ENCODE measurements at regions of chr10 and their contacts with region 1.

Region 1: GRCh38 chr10:14648005-14648765 is 126.5 kb downstream of the FAM107B start:
- DNase-seq: peak; percentile 83
- H3K4me3 Mint-ChIP-seq: peak overlapping the region; percentile 75
- H3K27ac Mint-ChIP-seq: peak overlapping the region; percentile 98
- H3K4me1 Mint-ChIP-seq: peaks cover 69% of the 10 kb centered on the region
- H3K27me3 Mint-ChIP-seq: no peaks in the 10 kb centered on the region

Region 2: GRCh38 chr10:14084875-14085274 is 563.3 kb before region 1 on chr10:
- CTCF ChIA-PET with region 1: no interaction called
- intact Hi-C with region 1: no loop called
- DNase-seq: no peak
- H3K4me3 Mint-ChIP-seq: no peak overlapping the region
- H3K27ac Mint-ChIP-seq: no peak overlapping the region
- H3K4me1 Mint-ChIP-seq: no peaks in the 10 kb centered on the region
- H3K27me3 Mint-ChIP-seq: no peaks in the 10 kb centered on the region

Region 3: DNA sequence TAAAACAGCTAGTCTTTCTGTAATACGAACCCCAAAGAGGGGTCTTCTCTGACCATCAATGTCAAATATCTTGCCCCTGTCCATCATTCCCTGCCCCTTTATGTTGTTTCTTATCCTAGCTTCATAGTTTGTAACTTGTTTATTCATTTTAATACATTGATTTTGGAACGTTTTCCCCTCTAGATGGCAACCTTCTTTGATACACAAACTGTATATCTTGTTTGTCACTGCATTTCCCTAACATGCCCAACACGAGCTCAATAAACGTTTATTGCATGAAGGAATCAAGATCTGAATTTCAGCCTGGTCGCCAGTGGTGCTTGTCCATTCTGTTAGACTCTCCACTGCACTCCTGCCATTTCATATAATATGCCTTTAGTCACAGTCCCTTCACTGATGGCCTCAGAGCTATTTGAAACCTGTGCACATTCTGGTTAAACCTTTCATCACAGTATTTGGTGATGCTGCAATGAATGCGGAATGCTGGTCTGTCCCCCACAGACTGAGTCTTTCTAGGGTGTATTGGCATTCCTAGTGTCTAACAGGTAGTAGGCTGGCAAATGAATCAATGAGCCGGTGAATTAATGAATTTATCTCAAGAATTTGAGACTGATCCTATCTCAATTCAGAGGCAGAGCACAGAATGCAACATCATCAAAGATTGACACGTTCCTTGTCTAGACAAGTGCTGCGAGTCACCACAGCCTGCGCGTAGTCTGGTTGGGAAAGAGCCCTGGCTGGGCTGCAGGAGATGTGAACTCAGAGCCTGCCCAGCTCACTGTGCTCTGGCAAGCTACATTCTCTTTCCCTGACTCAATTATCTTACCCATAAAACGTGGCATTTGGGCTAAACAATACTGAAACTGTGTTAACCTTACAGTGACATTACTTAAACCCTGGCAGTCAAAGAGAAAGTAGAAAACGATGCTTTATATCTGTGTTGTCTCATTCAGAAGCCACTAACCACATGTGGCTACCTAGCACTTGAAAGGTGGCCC is 262.3 kb before region 1 on chr10:
- CTCF ChIA-PET with region 1: no interaction called
- intact Hi-C with region 1: loop called (anchors 1 kb)
- DNase-seq: peak; percentile 67
- H3K4me3 Mint-ChIP-seq: no peak overlapping the region
- H3K27ac Mint-ChIP-seq: no peak overlapping the region
- H3K4me1 Mint-ChIP-seq: peaks cover 80% of the 10 kb centered on the region
- H3K27me3 Mint-ChIP-seq: peaks cover 3% of the 10 kb centered on the region

Region 4: DNA sequence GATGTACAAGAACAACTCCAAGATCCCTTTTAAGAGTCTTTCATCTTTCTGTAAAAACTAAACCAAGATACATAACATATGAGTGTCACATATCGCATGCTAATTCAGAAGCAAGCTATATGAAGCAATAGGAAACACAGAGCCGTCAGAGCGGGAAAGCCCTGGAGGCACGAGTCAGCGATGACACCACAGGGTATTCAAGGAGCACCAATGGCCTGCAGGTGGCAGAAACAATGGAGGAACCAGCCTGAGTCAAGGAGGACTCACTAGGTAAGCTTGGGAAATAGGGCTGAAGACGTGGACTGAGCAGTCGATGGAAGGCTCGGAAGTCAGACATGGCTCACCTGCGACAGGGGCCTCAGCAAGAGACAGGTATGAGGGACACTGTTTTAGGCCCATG is 87.9 kb before region 1 on chr10:
- CTCF ChIA-PET with region 1: no interaction called
- intact Hi-C with region 1: loop called (anchors 1 kb)
- DNase-seq: peak; percentile 94
- H3K4me3 Mint-ChIP-seq: peak overlapping the region; percentile 13
- H3K27ac Mint-ChIP-seq: peak overlapping the region; percentile 88
- H3K4me1 Mint-ChIP-seq: peaks cover 91% of the 10 kb centered on the region
- H3K27me3 Mint-ChIP-seq: no peaks in the 10 kb centered on the region

Region 5: GRCh38 chr10:14659626-14660196 is 11.5 kb after region 1 on chr10:
- CTCF ChIA-PET with region 1: interaction called, 4 read pairs
- intact Hi-C with region 1: loop called (anchors 1 kb)
- DNase-seq: peak; percentile 67
- H3K4me3 Mint-ChIP-seq: peak overlapping the region; percentile 32
- H3K27ac Mint-ChIP-seq: peak overlapping the region; percentile 89
- H3K4me1 Mint-ChIP-seq: peaks cover 68% of the 10 kb centered on the region
- H3K27me3 Mint-ChIP-seq: no peaks in the 10 kb centered on the region

Region 6: GRCh38 chr10:14698111-14698828 is 50.1 kb after region 1 on chr10:
- CTCF ChIA-PET with region 1: no interaction called
- intact Hi-C with region 1: no loop called
- DNase-seq: no peak
- H3K4me3 Mint-ChIP-seq: no peak overlapping the region
- H3K27ac Mint-ChIP-seq: no peak overlapping the region
- H3K4me1 Mint-ChIP-seq: no peaks in the 10 kb centered on the region
- H3K27me3 Mint-ChIP-seq: no peaks in the 10 kb centered on the region

Region 7: GRCh38 chr10:14773551-14774213 is 125.5 kb after region 1 on chr10:
- CTCF ChIA-PET with region 1: no interaction called
- intact Hi-C with region 1: no loop called
- DNase-seq: no peak
- H3K4me3 Mint-ChIP-seq: no peak overlapping the region
- H3K27ac Mint-ChIP-seq: no peak overlapping the region
- H3K4me1 Mint-ChIP-seq: no peaks in the 10 kb centered on the region
- H3K27me3 Mint-ChIP-seq: no peaks in the 10 kb centered on the region

Region 8: GRCh38 chr10:14812271-14812670 is 164.1 kb after region 1 on chr10:
- CTCF ChIA-PET with region 1: no interaction called
- intact Hi-C with region 1: loop called (anchors 1 kb)
- DNase-seq: no peak
- H3K4me3 Mint-ChIP-seq: no peak overlapping the region
- H3K27ac Mint-ChIP-seq: no peak overlapping the region
- H3K4me1 Mint-ChIP-seq: peaks cover 24% of the 10 kb centered on the region
- H3K27me3 Mint-ChIP-seq: no peaks in the 10 kb centered on the region

Region 9: GRCh38 chr10:15122477-15123030 is 474.4 kb after region 1 on chr10:
- CTCF ChIA-PET with region 1: no interaction called
- intact Hi-C with region 1: loop called (anchors 5 kb)
- DNase-seq: peak; percentile 59
- H3K4me3 Mint-ChIP-seq: no peak overlapping the region
- H3K27ac Mint-ChIP-seq: peak overlapping the region; percentile 86
- H3K4me1 Mint-ChIP-seq: peaks cover 32% of the 10 kb centered on the region
- H3K27me3 Mint-ChIP-seq: no peaks in the 10 kb centered on the region